Right cardiac atrium (tissue), 5 donors: ENCODE measurements at regions of chr17 and their contacts with region 1.

Region 1: DNA sequence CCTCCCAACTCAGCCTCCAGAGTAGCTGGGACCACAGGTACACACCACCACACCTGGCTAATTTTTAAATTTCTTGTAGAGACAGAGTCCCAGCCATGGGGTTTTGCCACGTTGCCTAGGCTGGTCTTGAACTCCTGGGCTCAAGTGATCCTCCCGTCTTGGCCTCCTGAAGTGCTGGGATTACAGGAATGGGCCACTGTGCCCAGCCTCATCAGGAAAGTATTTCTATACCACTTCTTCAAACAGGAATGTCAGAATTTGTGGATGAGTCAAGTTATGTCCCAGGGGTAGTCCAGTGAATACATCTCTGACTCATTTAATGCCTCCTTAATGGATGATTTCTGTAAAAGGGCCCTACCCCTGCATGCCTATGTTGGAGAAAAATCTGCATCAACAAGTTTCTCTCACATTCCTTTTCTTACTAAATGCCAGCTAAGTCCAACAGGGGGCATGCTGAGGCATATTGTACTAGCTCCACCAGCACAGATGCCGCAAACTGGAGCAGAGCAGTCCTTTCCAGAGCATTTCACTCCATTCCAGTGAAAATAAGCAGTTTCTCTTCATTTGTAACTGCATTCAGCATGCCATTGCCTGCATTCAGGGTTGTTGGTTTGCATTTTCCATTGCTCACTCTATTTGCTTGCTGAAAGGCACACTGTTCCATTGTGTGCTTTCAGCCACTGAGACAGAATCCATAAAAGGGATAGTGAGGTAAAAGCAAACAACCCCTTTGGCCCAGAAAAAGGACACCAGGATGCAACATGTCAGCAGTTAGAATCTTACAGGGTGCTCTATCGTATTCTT is 5.3 kb upstream of the CAVIN1 start:
- DNase-seq: peak in 2 of 3 donors; percentile 34 to 75
- ATAC-seq: peak; percentile 49 to 71
- H3K4me3 ChIP-seq: no peak overlapping the region
- H3K27ac ChIP-seq: no peak overlapping the region
- H3K4me1 ChIP-seq: peaks cover 5% of the 10 kb centered on the region
- H3K27me3 ChIP-seq: no peaks in the 10 kb centered on the region

Region 2: DNA sequence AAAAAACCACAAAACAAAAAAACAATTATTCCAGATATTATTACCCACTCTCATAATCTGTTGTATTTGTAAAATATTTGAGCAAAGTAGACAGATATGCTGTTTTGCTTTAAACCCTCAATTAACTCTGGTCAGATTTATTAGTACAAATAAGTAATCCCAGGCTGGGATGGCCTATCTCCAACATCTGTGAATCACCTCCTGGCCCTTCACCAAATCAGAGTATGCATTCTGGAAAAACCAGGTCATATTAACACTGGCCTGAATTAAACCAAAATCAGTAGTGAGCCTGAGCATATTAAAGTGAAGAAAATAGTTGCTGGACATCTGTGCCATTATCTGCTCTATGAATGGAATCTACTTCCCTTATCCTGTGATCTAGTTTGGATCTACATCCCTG is 81.1 kb before region 1 on chr17:
- intact Hi-C with region 1: no loop called
- DNase-seq: peak in 1 of 3 donors; percentile 36
- ATAC-seq: peak; percentile 47 to 77
- H3K4me3 ChIP-seq: no peak overlapping the region
- H3K27ac ChIP-seq: no peak overlapping the region
- H3K4me1 ChIP-seq: peaks cover 8% of the 10 kb centered on the region
- H3K27me3 ChIP-seq: no peaks in the 10 kb centered on the region

Region 3: GRCh38 chr17:42494673-42495072 is 66.3 kb after region 1 on chr17:
- intact Hi-C with region 1: no loop called
- DNase-seq: no peak
- ATAC-seq: no peak
- H3K4me3 ChIP-seq: no peak overlapping the region
- H3K27ac ChIP-seq: no peak overlapping the region
- H3K4me1 ChIP-seq: no peaks in the 10 kb centered on the region
- H3K27me3 ChIP-seq: no peaks in the 10 kb centered on the region

Region 4: GRCh38 chr17:42517516-42517915 is 89.2 kb after region 1 on chr17:
- intact Hi-C with region 1: loop called in 3 of 4 experiments (anchors 10 kb)
- DNase-seq: peak; percentile 87 to 96 (median 96)
- ATAC-seq: peak; percentile 60 to 62
- H3K4me3 ChIP-seq: no peak overlapping the region
- H3K27ac ChIP-seq: peak overlapping the region; percentile 99
- H3K4me1 ChIP-seq: peaks cover 50% of the 10 kb centered on the region
- H3K27me3 ChIP-seq: no peaks in the 10 kb centered on the region

Region 5: DNA sequence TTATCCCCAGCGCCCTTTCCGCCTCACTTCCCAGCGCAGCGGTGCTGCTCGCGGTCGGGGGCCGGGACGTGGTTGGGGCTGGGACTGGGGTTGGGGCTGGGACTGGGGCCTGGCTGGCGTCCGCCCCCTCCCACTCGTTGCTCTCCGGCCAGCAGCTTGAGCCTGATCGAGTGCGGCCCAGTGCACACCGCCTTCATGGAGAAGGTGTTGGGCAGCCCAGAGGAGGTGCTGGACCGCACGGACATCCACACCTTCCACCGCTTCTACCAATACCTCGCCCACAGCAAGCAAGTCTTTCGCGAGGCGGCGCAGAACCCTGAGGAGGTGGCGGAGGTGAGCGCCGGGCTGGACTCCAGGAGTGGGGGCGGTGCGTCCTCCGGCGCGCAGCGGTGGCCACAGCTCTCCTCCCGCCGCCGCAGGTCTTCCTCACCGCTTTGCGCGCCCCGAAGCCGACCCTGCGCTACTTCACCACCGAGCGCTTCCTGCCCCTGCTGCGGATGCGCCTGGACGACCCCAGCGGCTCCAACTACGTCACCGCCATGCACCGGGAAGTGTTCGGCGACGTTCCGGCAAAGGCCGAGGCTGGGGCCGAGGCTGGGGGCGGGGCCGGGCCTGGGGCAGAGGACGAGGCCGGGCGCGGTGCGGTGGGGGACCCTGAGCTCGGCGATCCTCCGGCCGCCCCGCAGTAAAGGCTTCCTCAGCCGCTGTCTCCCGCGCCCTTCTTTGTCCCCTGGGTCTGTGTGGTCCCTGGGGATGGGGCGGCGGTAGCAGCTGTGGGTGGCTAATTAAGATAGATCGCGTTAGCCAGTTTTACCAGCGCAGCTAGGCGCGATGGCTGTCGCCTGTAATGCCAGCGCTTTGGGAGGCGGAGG is 126.1 kb after region 1 on chr17:
- intact Hi-C with region 1: no loop called
- DNase-seq: peak; percentile 91 to 96 (median 96)
- ATAC-seq: peak; percentile 94
- H3K4me3 ChIP-seq: peak overlapping the region; percentile 68
- H3K27ac ChIP-seq: peak overlapping the region; percentile 77
- H3K4me1 ChIP-seq: no peaks in the 10 kb centered on the region
- H3K27me3 ChIP-seq: no peaks in the 10 kb centered on the region